ENCODE measurements at regions of chr18 and their contacts with region 1.

Region 1: DNA sequence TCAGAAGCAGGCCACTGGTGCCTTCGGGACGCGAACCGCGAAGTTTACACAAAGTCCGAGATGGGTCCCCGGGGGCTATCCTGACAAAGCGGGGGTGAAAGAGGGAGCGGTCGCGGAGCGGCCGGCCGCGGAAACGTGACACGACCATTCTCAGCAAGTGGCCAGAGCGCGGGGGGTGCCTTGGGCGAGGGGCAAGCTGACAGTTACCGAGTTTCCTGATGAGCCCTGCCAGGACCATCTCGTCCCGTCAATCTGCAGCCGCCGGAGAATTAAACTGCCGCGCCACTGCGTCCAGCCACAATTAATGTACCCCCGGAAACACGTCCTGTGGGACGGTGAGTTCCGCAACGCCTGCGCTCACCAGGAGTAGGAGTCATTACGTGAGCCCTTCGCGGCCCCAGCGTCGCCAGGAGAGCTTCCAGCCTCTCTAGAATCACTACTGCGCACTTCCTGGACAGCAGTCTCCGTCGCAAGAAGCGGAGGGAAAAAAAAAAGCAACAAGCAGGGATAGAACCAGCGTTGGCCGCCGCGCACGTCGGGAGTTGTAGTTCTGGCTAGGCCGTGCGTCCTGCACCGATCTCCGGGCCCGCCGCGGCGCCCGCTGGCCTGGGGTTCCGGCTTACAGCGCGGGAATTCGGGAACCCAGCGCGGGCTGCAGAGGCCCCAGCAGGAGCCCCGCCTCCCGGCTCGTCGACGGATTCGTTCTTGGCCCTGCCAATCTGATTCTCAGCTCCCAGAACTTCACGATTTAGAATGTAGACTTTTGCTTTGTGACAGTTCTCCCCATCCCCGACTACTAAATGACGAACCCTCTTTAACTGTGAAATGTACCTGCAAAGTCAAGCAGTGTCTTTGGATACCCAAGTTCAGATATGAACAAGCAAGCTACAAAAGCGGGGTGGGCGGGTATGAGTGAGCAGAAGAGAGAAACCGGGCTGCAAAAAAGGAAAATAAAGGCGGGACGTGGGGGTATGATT is at the start of gene RTTN:
- DNase-seq: peak; percentile 91
- H3K4me3 Mint-ChIP-seq: peak within 1 kb of the TSS; percentile 93
- H3K27ac Mint-ChIP-seq: peak within 1 kb of the TSS; percentile 98
- H3K4me1 Mint-ChIP-seq: peaks cover 22% of the 10 kb centered on the region
- H3K27me3 Mint-ChIP-seq: peaks cover 15% of the 10 kb centered on the region
- total RNA-seq, gene RTTN: 21.0 and 25.2 TPM in 2 replicates

Region 2: GRCh38 chr18:70116949-70117348 is 88.8 kb before region 1 on chr18:
- intact Hi-C with region 1: no loop called
- DNase-seq: no peak
- H3K4me3 Mint-ChIP-seq: no peak overlapping the region
- H3K27ac Mint-ChIP-seq: no peak overlapping the region
- H3K4me1 Mint-ChIP-seq: peaks cover 8% of the 10 kb centered on the region
- H3K27me3 Mint-ChIP-seq: no peaks in the 10 kb centered on the region

Region 3: GRCh38 chr18:70127359-70127758 is 78.3 kb before region 1 on chr18:
- intact Hi-C with region 1: no loop called
- DNase-seq: no peak
- H3K4me3 Mint-ChIP-seq: no peak overlapping the region
- H3K27ac Mint-ChIP-seq: no peak overlapping the region
- H3K4me1 Mint-ChIP-seq: peaks cover 4% of the 10 kb centered on the region
- H3K27me3 Mint-ChIP-seq: no peaks in the 10 kb centered on the region

Region 4: DNA sequence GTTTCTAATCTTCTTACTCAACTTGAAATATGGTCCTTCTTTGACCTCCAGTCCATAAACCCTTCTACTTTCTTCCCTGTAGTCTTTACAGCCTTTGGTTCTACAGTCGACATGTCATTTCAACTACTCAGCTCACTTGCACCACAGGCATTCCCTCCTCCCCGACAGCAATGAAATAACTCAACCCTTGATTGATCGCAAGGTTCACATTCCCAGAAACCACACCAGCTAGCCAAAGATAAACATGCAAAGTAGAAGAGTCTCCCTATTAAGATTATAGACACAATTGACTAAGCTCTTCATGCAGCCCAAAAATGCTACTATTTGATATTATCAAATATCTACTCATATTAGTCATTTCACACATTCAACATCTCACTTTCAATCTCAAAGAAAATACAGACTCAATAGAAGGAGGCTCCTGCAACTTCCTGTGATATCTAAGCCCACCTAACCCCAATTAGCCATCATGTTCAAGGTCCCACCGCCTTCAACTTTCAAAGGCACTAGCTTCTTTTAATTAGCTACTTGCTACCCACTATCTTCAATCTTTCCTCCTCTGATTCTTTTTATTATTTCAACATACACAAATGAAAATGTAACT is 51.0 kb before region 1 on chr18:
- intact Hi-C with region 1: no loop called
- DNase-seq: no peak
- H3K4me3 Mint-ChIP-seq: no peak overlapping the region
- H3K27ac Mint-ChIP-seq: no peak overlapping the region
- H3K4me1 Mint-ChIP-seq: peaks cover 31% of the 10 kb centered on the region
- H3K27me3 Mint-ChIP-seq: no peaks in the 10 kb centered on the region

Region 5: GRCh38 chr18:70288851-70289328 is 83.2 kb after region 1 on chr18 and contains the start of gene SOCS6:
- intact Hi-C with region 1: loop called (anchors 1 kb)
- DNase-seq: peak; percentile 46
- H3K4me3 Mint-ChIP-seq: peak within 1 kb of the TSS; percentile 85
- H3K27ac Mint-ChIP-seq: peak within 1 kb of the TSS; percentile 70
- H3K4me1 Mint-ChIP-seq: peaks cover 18% of the 10 kb centered on the region
- H3K27me3 Mint-ChIP-seq: peaks cover 34% of the 10 kb centered on the region
- total RNA-seq, gene SOCS6: 3.8 and 4.5 TPM in 2 replicates

Region 6: DNA sequence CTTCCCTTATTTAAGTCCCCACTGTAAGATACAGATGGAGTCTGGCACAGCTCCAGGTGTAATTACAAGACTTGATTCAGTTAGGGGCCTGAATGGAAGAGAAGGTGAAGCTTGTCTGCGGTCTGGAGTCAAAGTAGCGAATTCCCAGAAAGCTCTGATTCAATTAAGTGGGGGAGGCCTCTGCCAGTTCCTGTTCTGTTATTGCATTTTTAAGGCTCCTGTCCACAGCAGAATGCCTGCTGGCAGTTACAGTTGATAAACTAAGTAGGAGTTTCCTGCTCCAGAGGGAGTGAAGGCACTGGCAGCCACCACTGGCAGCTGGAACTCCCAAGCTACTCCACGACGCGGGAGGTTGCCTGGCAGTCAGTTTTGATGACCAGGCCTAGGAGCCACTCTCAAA is 264.2 kb after region 1 on chr18:
- intact Hi-C with region 1: no loop called
- DNase-seq: no peak
- H3K4me3 Mint-ChIP-seq: no peak overlapping the region
- H3K27ac Mint-ChIP-seq: no peak overlapping the region
- H3K4me1 Mint-ChIP-seq: no peaks in the 10 kb centered on the region
- H3K27me3 Mint-ChIP-seq: no peaks in the 10 kb centered on the region

Measured in activated T-helper 2 cell treated with anti-CD3 and anti-CD28 coated beads, Interferon-gamma antibody, Interleukin-2, Interleukin-4, amounts not matched to agents 10 μg/mL and 5 μg/mL and 100 μg/mL, durations not matched to agents 14 hours and 24 hours and 36 hours (primary cell).